ENCODE measurements at regions of chr22 and their contacts with region 1.

Region 1: DNA sequence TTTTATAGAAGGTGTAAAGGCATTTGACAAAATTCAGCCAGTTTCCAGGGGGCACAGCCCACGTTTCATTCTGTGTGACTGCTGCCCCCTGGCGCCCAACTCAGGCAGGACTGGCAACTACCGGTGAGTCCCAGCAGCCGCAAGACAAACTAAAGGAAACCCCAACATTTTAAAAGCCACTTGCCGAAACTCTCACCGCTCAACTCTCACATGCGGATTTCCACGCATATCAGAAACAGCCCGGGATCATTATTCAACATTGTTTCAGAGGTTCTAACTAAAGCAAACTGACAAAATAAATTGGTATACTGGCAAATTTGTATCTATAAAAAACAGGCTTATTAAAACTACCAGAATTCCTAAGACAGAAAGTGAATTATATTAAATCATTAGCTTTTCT is 48.2 kb downstream of the MORC2 start:
- DNase-seq: peak; percentile 88
- ATAC-seq: peak; percentile 85
- H3K4me3 Mint-ChIP-seq: peak overlapping the region; percentile 44
- H3K27ac Mint-ChIP-seq: no peak overlapping the region
- H3K4me1 Mint-ChIP-seq: peaks cover 17% of the 10 kb centered on the region
- H3K27me3 Mint-ChIP-seq: no peaks in the 10 kb centered on the region

Region 2: GRCh38 chr22:30763815-30764686 is 156.4 kb before region 1 on chr22:
- CTCF ChIA-PET with region 1: interaction called, 37 read pairs
- POLR2A ChIA-PET with region 1: interaction called, 3 read pairs
- DNase-seq: peak; percentile 74
- ATAC-seq: peak; percentile 81
- H3K4me3 Mint-ChIP-seq: no peak overlapping the region
- H3K27ac Mint-ChIP-seq: no peak overlapping the region
- H3K4me1 Mint-ChIP-seq: no peaks in the 10 kb centered on the region
- H3K27me3 Mint-ChIP-seq: peaks cover 3% of the 10 kb centered on the region

Region 3: DNA sequence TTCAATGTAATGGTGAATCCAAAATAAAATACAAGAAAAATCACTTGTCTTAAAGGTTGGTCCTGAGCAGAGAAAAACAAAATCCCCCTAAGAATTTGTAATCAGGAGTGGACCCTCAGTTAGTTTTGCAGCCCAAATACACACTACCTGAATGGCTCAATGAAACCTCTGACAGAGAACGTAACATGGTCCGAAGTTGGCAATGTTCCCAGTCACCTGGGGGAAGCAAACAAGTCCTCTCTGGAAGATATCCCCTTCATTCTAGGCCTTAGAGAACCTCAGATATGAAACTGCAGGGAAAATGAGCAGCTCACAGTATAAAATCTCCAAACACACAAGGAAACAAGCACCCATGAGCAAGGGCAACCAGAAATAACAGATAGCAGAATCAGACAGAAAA is 10.0 kb before region 1 on chr22:
- CTCF ChIA-PET with region 1: interaction called, 11 read pairs
- POLR2A ChIA-PET with region 1: no interaction called
- DNase-seq: no peak
- ATAC-seq: no peak
- H3K4me3 Mint-ChIP-seq: no peak overlapping the region
- H3K27ac Mint-ChIP-seq: no peak overlapping the region
- H3K4me1 Mint-ChIP-seq: no peaks in the 10 kb centered on the region
- H3K27me3 Mint-ChIP-seq: no peaks in the 10 kb centered on the region

Region 4: GRCh38 chr22:30931541-30932300 is 11.3 kb after region 1 on chr22:
- CTCF ChIA-PET with region 1: interaction called, 19 read pairs
- POLR2A ChIA-PET with region 1: interaction called, 3 read pairs
- DNase-seq: no peak
- ATAC-seq: no peak
- H3K4me3 Mint-ChIP-seq: no peak overlapping the region
- H3K27ac Mint-ChIP-seq: peak overlapping the region; percentile 14
- H3K4me1 Mint-ChIP-seq: no peaks in the 10 kb centered on the region
- H3K27me3 Mint-ChIP-seq: no peaks in the 10 kb centered on the region

Region 5: GRCh38 chr22:30940685-30941362 is 20.4 kb after region 1 on chr22:
- CTCF ChIA-PET with region 1: interaction called, 13 read pairs
- POLR2A ChIA-PET with region 1: interaction called, 3 read pairs
- DNase-seq: peak; percentile 49
- ATAC-seq: peak; percentile 43
- H3K4me3 Mint-ChIP-seq: peak overlapping the region; percentile 56
- H3K27ac Mint-ChIP-seq: peak overlapping the region; percentile 88
- H3K4me1 Mint-ChIP-seq: peaks cover 61% of the 10 kb centered on the region
- H3K27me3 Mint-ChIP-seq: no peaks in the 10 kb centered on the region

Region 6: DNA sequence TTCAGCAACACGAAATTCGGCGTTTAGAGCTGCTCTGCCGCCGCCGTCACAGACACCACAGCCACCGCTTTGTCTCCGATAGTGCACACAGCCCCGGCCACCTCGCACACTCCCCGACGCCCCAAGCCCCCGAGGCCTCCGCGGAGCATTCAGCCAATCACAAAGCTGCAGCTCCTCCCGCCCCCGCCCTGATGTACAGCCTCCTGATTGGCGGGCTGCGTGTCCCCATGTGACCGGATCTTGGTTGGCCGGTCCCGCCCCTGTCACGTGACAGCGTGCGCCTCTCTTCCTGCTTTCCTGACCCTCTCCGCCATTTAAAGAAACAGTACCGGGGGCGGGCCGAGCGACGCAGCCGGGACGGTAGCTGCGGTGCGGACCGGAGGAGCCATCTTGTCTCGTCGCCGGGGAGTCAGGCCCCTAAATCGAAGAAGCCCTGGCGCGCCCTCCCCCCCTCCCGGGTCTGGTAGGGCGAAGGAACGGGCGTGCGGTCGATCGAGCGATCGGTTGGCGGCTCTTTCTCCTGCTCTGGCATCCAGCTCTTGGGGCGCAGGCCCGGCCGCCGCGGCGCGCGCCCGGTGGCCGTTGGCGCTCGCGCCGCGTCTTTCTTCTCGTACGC is 48.6 kb after region 1 on chr22 and contains the start of gene TUG1:
- CTCF ChIA-PET with region 1: interaction called, 11 read pairs
- POLR2A ChIA-PET with region 1: interaction called, 13 read pairs
- DNase-seq: peak; percentile 98
- ATAC-seq: peak; percentile 93
- H3K4me3 Mint-ChIP-seq: peak within 1 kb of the TSS; percentile 89
- H3K27ac Mint-ChIP-seq: peak within 1 kb of the TSS; percentile 99
- H3K4me1 Mint-ChIP-seq: peaks cover 60% of the 10 kb centered on the region
- H3K27me3 Mint-ChIP-seq: no peaks in the 10 kb centered on the region
- total RNA-seq, gene TUG1: 67.3 to 72.3 TPM